CD4-positive, alpha-beta T cell (primary cell): ENCODE measurements at regions of chr7 and their contacts with region 1.

Region 1: GRCh38 chr7:18958627-18959026 is 158.8 kb downstream of the TWIST1 start:
- DNase-seq: no peak
- ATAC-seq: no peak
- H3K4me3 ChIP-seq: no peak overlapping the region
- H3K4me3 Mint-ChIP-seq: no peak overlapping the region
- H3K27ac ChIP-seq: no peak overlapping the region
- H3K27ac Mint-ChIP-seq: no peak overlapping the region
- H3K4me1 ChIP-seq: no peaks in the 10 kb centered on the region
- H3K4me1 Mint-ChIP-seq: no peaks in the 10 kb centered on the region
- H3K27me3 ChIP-seq: no peaks in the 10 kb centered on the region
- H3K27me3 Mint-ChIP-seq: no peaks in the 10 kb centered on the region
- CTCF ChIP-seq: no peak

Region 2: GRCh38 chr7:18895456-18895855 is 63.2 kb before region 1 on chr7:
- CTCF ChIA-PET with region 1: no interaction called
- POLR2A ChIA-PET with region 1: no interaction called
- intact Hi-C with region 1: loop called in 1 of 2 experiments (anchors 10 kb)
- DNase-seq: no peak
- ATAC-seq: no peak
- H3K4me3 ChIP-seq: no peak overlapping the region
- H3K4me3 Mint-ChIP-seq: no peak overlapping the region
- H3K27ac ChIP-seq: no peak overlapping the region
- H3K27ac Mint-ChIP-seq: no peak overlapping the region
- H3K4me1 ChIP-seq: no peaks in the 10 kb centered on the region
- H3K4me1 Mint-ChIP-seq: no peaks in the 10 kb centered on the region
- H3K27me3 ChIP-seq: no peaks in the 10 kb centered on the region
- H3K27me3 Mint-ChIP-seq: no peaks in the 10 kb centered on the region
- CTCF ChIP-seq: no peak